ENCODE measurements at regions of chr12 and their contacts with region 1.

Region 1: GRCh38 chr12:50174971-50175715 is 8.0 kb upstream of the CERS5 start:
- DNase-seq: peak; percentile 58 to 74
- H3K4me3 ChIP-seq: no peak overlapping the region
- H3K4me1 ChIP-seq: no peaks in the 10 kb centered on the region
- H3K27me3 ChIP-seq: no peaks in the 10 kb centered on the region

Region 2: GRCh38 chr12:50074936-50075807 is 100.0 kb before region 1 on chr12:
- in situ Hi-C with region 1: loop called (anchors 10 kb)
- DNase-seq: peak; percentile 75 to 90
- H3K4me3 ChIP-seq: no peak overlapping the region
- H3K4me1 ChIP-seq: peaks cover 3% of the 10 kb centered on the region; the same call in 1 of the 2 replicates
- H3K27me3 ChIP-seq: no peaks in the 10 kb centered on the region

Measured in HAP-1 (cell line).